GM10248 (cell line): ENCODE measurements at regions of chr11 and their contacts with region 1.

Region 1: GRCh38 chr11:85854557-85855340 is 434 bp upstream of the CCDC83 start:
- DNase-seq: peak; percentile 94
- CTCF ChIP-seq: peak; percentile 83

Region 2: DNA sequence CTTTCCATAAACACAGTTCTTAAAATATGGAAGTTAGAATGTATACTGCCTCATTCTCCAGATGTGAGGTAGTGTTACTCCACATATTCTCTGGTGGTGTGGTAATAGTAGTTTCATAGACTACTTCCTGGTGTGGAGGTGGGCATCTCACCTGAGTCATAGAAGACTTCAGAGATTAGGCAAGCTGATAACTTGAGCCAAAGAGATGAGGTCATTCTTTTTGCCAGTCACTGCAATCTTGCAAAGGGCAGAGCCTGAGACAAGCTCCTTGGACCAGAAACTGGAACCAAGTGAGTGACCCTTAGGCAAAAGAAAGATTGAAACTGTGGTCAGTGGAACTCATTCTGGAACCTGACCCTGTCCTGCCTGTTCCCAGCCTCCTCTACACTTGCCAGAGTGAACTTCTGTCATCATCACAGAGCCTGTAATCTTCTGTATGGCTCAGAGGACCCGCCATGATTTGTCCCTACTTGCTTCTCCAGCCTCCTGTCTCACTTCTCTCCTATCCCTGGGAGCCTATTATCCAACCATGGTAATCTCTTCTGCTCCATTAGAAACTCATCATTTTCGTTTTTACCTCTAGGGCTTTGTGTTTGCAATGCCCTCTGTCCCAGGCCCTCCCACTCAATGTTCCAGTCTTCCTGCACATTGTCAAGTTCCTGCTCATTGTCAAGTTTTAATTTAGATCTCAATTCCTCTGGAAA is 10.2 kb before region 1 on chr11:
- CTCF ChIA-PET with region 1: interaction called, 13 read pairs
- POLR2A ChIA-PET with region 1: no interaction called
- DNase-seq: no peak
- CTCF ChIP-seq: no peak

Region 3: GRCh38 chr11:85867751-85868150 is 13.0 kb after region 1 on chr11:
- CTCF ChIA-PET with region 1: interaction called, 29 read pairs
- POLR2A ChIA-PET with region 1: no interaction called
- DNase-seq: no peak
- CTCF ChIP-seq: no peak

Region 4: GRCh38 chr11:86291466-86292262 is 436.9 kb after region 1 on chr11:
- CTCF ChIA-PET with region 1: interaction called, 22 read pairs
- POLR2A ChIA-PET with region 1: interaction called, 4 read pairs
- DNase-seq: peak; percentile 50
- CTCF ChIP-seq: peak; percentile 51

Region 5: DNA sequence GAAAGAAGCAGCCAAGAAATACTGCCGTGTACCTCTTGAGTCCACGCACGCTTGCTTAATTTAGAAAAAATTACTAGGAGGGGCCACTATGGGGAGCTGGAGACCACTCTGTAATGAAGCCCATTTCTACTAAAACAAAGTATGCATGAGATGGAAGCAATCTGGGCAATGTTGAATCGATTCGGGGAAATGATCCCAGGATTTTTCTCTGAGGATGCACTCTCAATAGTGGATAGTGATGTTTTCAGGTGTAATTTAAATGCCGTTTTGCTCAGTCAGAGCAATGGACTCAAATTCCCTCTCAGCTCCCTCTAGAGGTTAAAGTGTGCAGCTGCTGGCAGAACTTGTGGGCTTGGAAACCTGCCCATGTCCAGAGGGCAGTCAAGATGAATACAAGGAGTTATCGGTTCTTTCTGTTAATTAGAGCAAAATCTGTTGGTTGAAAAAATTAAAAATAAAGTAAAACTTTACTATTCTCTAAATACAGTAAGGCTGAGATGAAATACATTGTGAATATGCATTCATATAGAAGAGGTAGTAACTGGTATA is 753.6 kb after region 1 on chr11:
- CTCF ChIA-PET with region 1: interaction called, 11 read pairs
- POLR2A ChIA-PET with region 1: no interaction called
- DNase-seq: peak; percentile 46
- CTCF ChIP-seq: peak; percentile 89